Mammary epithelial cell (primary cell): ENCODE measurements at regions of chr10 and their contacts with region 1.

Region 1: GRCh38 chr10:110600487-110601101 is 33.1 kb downstream of the SMC3 start:
- DNase-seq: peak; percentile 43
- H3K4me3 ChIP-seq: no peak overlapping the region
- H3K27ac ChIP-seq: no peak overlapping the region
- H3K4me1 ChIP-seq: no peaks in the 10 kb centered on the region
- H3K27me3 ChIP-seq: no peaks in the 10 kb centered on the region
- CTCF ChIP-seq: peak; percentile 52 to 58

Region 2: DNA sequence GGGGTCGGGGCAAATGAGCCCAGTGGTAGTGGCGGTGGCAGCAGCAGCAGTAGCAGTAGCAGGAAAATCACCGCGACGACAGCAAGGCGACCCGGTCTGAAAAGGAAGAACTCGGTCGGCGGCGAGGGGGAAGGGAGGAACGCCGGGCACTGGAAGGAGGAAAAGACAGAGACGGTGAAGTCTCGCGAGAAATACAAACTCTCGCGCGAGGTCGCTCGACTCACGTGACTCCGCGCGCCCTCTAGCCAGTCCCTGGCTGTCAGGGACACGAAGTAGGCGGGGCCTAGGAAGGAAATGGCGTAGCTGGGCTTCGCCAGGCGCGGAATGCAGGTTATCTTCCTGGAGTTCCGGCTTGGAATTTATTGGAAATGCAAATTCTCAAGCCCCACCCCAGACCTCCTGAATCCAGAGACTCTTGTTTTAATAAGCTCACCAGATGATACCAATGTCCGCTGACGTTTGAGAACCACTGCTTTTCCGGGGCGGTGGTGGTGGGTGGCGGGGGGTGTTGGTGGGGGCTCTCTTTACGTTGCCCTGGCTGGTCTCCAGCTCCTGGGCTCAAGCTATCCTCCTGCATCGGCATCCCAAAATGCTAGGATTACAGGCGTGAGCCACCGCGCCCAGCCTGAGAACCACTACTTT is 295.7 kb before region 1 on chr10 and contains the start of gene SMNDC1:
- CTCF ChIA-PET with region 1: no interaction called
- dilution Hi-C with region 1: no loop called
- in situ Hi-C with region 1: no loop called
- intact Hi-C with region 1: loop called (anchors 1 kb)
- DNase-seq: peak; percentile 96
- H3K4me3 ChIP-seq: peak within 1 kb of the TSS; percentile 69 to 97 (median 95)
- H3K27ac ChIP-seq: peak within 1 kb of the TSS; percentile 86
- H3K4me1 ChIP-seq: peaks cover 19% of the 10 kb centered on the region
- H3K27me3 ChIP-seq: no peaks in the 10 kb centered on the region
- CTCF ChIP-seq: no peak
- total RNA-seq, gene SMNDC1: 6.5 to 42.8 TPM

Region 3: GRCh38 chr10:110502851-110503301 is 97.7 kb before region 1 on chr10:
- CTCF ChIA-PET with region 1: no interaction called
- dilution Hi-C with region 1: no loop called
- in situ Hi-C with region 1: no loop called
- intact Hi-C with region 1: loop called (anchors 1 kb)
- DNase-seq: peak; percentile 55
- H3K4me3 ChIP-seq: no peak overlapping the region
- H3K27ac ChIP-seq: peak overlapping the region; percentile 53
- H3K4me1 ChIP-seq: peaks cover 45% of the 10 kb centered on the region
- H3K27me3 ChIP-seq: no peaks in the 10 kb centered on the region
- CTCF ChIP-seq: no peak

Region 4: GRCh38 chr10:110613341-110613995 is 12.9 kb after region 1 on chr10:
- CTCF ChIA-PET with region 1: no interaction called
- dilution Hi-C with region 1: no loop called
- in situ Hi-C with region 1: no loop called
- intact Hi-C with region 1: no loop called
- DNase-seq: no peak
- H3K4me3 ChIP-seq: no peak overlapping the region
- H3K27ac ChIP-seq: no peak overlapping the region
- H3K4me1 ChIP-seq: peaks cover 4% of the 10 kb centered on the region
- H3K27me3 ChIP-seq: no peaks in the 10 kb centered on the region
- CTCF ChIP-seq: no peak

Region 5: GRCh38 chr10:110820321-110820814 is 219.8 kb after region 1 on chr10:
- CTCF ChIA-PET with region 1: no interaction called
- dilution Hi-C with region 1: no loop called
- in situ Hi-C with region 1: no loop called
- intact Hi-C with region 1: no loop called
- DNase-seq: no peak
- H3K4me3 ChIP-seq: no peak overlapping the region
- H3K27ac ChIP-seq: no peak overlapping the region
- H3K4me1 ChIP-seq: no peaks in the 10 kb centered on the region
- H3K27me3 ChIP-seq: no peaks in the 10 kb centered on the region
- CTCF ChIP-seq: no peak

Region 6: DNA sequence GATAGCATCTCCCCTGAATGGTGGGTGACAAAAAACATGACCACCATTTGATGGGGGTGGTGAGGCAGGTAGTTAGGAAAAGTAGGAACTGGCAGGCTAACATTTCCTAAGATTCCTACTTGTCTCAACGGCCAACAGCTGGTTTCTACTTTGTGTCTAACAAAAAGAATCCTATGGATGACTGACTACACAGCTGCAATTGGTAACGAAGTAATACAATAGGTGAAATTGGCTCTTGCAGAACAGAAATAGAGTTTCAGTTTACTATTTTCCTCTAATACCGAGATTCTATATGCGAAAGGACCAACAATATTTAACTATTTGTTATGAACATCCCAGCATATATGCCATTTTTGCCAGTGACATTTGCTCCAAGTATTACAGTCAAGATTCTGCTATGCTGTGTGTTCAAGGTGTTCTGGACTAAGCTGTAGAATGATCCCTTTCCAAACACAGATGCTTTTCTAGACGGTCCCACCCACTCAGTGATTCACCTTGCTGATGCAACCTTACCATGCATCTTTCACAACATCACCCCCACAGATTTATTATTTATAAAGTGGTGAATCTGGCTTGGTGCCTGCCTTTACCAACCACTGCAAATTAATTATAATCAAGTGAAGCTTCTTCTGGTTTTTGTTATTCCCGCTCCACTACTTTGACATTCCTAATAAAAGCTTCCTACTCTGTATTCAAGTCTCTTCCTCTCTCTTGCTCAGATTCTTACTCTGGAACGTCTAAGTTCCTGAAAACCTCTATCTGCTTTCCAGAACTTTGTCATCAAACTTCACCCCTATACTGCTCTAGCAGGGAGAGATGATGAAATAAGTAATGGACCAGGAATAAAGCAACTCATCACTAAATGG is 301.6 kb after region 1 on chr10:
- CTCF ChIA-PET with region 1: no interaction called
- dilution Hi-C with region 1: no loop called
- in situ Hi-C with region 1: loop called (anchors 10 to 25 kb)
- intact Hi-C with region 1: no loop called
- DNase-seq: peak; percentile 85
- H3K4me3 ChIP-seq: no peak overlapping the region
- H3K27ac ChIP-seq: peak overlapping the region; percentile 72
- H3K4me1 ChIP-seq: peaks cover 25% of the 10 kb centered on the region
- H3K27me3 ChIP-seq: no peaks in the 10 kb centered on the region
- CTCF ChIP-seq: no peak